Calu3 (cell line): ENCODE measurements at regions of chr6 and their contacts with region 1.

Region 1: DNA sequence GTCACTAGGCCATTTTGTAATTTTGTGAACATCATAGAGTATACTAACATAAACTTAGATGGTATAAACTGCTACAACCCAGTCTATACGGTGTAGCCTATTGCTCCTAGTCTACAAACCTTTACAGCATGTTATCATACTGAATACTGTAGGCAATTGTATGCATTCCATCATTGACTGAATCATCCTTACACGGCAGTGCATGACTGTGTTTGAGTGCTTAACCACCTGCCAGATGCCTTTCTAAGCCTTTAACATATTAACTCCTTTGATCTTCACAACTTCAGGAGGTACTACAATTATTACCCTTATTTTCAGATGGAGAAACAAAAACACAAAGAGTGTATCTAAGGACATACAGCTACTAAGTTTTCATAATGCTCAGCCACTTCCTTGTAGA is 14.0 kb downstream of the DPPA5 start:
- DNase-seq: no peak
- H3K4me3 Mint-ChIP-seq: no peak overlapping the region
- H3K27ac Mint-ChIP-seq: no peak overlapping the region
- H3K4me1 Mint-ChIP-seq: peaks cover 6% of the 10 kb centered on the region
- H3K27me3 Mint-ChIP-seq: no peaks in the 10 kb centered on the region
- CTCF ChIP-seq: no peak

Region 2: GRCh38 chr6:73367761-73368355 is 27.8 kb after region 1 on chr6:
- CTCF ChIA-PET with region 1: interaction called, 11 read pairs
- intact Hi-C with region 1: no loop called
- DNase-seq: no peak
- H3K4me3 Mint-ChIP-seq: no peak overlapping the region
- H3K27ac Mint-ChIP-seq: no peak overlapping the region
- H3K4me1 Mint-ChIP-seq: no peaks in the 10 kb centered on the region
- H3K27me3 Mint-ChIP-seq: no peaks in the 10 kb centered on the region
- CTCF ChIP-seq: no peak